Endothelial cell of umbilical vein (primary cell): ENCODE measurements at regions of chr10 and their contacts with region 1.

Region 1: DNA sequence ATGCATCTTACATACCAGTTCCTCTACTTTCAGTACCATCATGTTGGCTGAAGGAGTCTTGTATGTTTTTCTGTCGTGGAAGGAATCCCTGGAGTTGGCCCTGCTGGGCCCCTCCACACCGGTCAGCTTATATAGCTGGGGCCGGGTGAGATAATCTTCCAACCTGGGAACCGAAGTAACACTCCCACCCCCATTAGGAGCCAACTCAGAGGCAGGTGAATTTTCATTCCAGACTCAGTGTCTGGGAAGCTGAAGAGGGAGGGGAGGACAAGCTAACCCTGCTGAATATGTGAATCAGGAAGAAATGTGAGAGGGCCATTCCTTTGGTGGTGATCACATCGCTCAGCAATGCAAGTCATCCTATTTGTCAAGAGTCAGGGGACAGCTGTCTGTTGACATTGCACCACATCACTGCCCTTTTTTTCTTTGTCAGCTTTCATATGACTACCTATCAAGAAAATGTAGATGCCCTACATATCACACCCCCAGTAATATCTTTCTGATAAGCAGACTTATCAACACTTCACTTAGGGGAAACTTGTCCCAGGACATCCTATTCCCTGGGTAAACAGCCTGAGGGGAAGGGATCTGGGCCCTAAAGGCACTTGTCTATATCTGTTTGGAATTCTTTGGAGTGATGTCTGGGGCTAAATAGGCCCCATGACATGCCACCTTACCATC is at the start of gene ANKRD1:
- DNase-seq: peak; percentile 97
- H3K4me3 ChIP-seq: peak within 1 kb of the TSS; percentile 52 to 98 (median 56)
- H3K27ac ChIP-seq: peak within 1 kb of the TSS; percentile 82
- H3K4me1 ChIP-seq: peaks cover 28% of the 10 kb centered on the region
- H3K27me3 ChIP-seq: no peaks in the 10 kb centered on the region
- CTCF ChIP-seq: no peak
- POLR2A ChIP-seq: peak; percentile 94
- total RNA-seq, gene ANKRD1: 591 and 664 TPM in 2 replicates

Region 2: DNA sequence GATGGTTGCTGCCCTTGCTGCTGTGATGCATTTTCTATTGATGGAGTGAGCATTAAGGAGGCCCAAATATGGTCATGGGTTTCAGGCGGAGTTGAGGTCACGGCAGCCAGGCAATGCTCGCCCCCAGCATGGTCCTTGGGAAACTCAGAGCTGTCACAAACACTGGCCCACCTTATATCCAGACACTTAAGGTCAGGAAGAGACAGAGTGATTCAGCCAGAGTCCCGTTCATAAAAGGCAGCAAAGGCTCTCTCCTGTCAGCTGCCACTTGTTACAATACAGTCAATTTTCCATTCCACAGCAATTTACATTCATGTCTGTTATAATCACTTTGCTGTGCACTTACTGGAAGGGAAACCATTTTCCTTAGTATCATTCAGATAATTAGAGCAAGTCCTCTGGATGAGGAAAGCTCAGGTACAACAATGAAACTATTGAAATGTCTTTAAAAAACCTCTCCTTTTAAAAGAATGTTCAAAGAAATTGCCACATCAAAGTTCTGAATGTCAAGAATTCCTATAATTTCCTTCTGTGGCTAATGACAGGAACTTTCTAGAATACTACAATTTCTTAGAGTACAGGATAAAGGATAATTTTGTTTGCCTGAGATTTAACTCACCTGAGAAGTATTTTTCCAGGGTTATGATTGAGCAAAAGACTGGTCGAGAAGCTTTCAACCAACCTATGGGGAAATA is 14.6 kb after region 1 on chr10:
- CTCF ChIA-PET with region 1: interaction called, 30 read pairs
- POLR2A ChIA-PET with region 1: interaction called, 71 read pairs
- dilution Hi-C with region 1: no loop called
- intact Hi-C with region 1: loop called (anchors 1 kb)
- DNase-seq: peak; percentile 36
- H3K4me3 ChIP-seq: no peak overlapping the region
- H3K27ac ChIP-seq: no peak overlapping the region
- H3K4me1 ChIP-seq: peaks cover 53% of the 10 kb centered on the region
- H3K27me3 ChIP-seq: no peaks in the 10 kb centered on the region
- CTCF ChIP-seq: no peak
- POLR2A ChIP-seq: no peak

Region 3: GRCh38 chr10:90969947-90970684 is 49.0 kb after region 1 on chr10:
- CTCF ChIA-PET with region 1: interaction called, 6 read pairs
- POLR2A ChIA-PET with region 1: interaction called, 7 read pairs
- dilution Hi-C with region 1: no loop called
- intact Hi-C with region 1: loop called (anchors 2 kb)
- DNase-seq: no peak
- H3K4me3 ChIP-seq: no peak overlapping the region
- H3K27ac ChIP-seq: peak overlapping the region; percentile 28
- H3K4me1 ChIP-seq: peaks cover 8% of the 10 kb centered on the region
- H3K27me3 ChIP-seq: no peaks in the 10 kb centered on the region
- CTCF ChIP-seq: no peak
- POLR2A ChIP-seq: no peak

Region 4: GRCh38 chr10:91006001-91006751 is 85.0 kb after region 1 on chr10:
- CTCF ChIA-PET with region 1: interaction called, 9 read pairs
- POLR2A ChIA-PET with region 1: interaction called, 5 read pairs
- dilution Hi-C with region 1: no loop called
- intact Hi-C with region 1: loop called (anchors 2 kb)
- DNase-seq: peak; percentile 90
- H3K4me3 ChIP-seq: no peak overlapping the region
- H3K27ac ChIP-seq: no peak overlapping the region
- H3K4me1 ChIP-seq: no peaks in the 10 kb centered on the region
- H3K27me3 ChIP-seq: no peaks in the 10 kb centered on the region
- CTCF ChIP-seq: peak; percentile 83 to 87
- POLR2A ChIP-seq: no peak

Region 5: DNA sequence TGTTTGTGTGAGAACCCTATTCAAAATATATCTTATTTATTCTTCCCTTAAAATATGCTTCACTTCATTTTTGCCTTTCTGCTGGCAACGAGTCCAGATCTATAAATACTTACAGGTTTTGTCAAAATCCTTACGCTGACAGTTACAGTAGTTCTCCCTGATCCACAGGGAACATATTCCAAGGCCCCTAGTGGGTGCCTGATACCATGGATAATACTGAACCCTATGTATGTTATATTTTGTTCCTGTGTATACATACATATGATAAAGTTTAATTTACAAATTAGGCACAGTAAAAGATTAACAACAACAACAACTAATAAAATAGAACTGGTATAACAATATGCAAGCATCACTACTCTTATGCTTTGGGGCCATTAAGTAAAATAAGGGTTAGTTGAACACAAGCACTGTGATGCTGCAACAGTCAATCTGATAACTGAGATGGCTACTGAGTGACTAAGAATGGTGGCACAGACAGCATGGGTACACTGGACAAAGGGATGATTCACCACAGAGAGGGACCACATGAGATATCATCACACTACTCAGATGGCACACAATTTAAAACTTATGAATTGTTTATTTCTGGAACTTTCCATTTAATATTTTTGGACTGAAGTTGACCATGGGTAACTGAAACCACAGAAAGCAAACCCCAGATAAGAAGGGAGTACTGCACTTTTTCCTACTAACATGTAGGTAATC is 269.9 kb after region 1 on chr10:
- CTCF ChIA-PET with region 1: no interaction called
- POLR2A ChIA-PET with region 1: no interaction called
- dilution Hi-C with region 1: no loop called
- intact Hi-C with region 1: no loop called
- DNase-seq: no peak
- H3K4me3 ChIP-seq: no peak overlapping the region
- H3K27ac ChIP-seq: no peak overlapping the region
- H3K4me1 ChIP-seq: no peaks in the 10 kb centered on the region
- H3K27me3 ChIP-seq: no peaks in the 10 kb centered on the region
- CTCF ChIP-seq: no peak
- POLR2A ChIP-seq: no peak